ENCODE measurements at regions of chr12 and their contacts with region 1.

Region 1: GRCh38 chr12:120116792-120117651 is 469 bp upstream of the RAB35 start:
- DNase-seq: peak; percentile 72 to 96
- H3K4me3 ChIP-seq: peak overlapping the region; percentile 87 to 89
- H3K27ac ChIP-seq: peak overlapping the region; percentile 92 to 94
- H3K4me1 ChIP-seq: peaks cover 13 to 31% of the 10 kb centered on the region in 2 donors
- H3K27me3 ChIP-seq: no peaks in the 10 kb centered on the region
- CTCF ChIP-seq: no peak

Region 2: DNA sequence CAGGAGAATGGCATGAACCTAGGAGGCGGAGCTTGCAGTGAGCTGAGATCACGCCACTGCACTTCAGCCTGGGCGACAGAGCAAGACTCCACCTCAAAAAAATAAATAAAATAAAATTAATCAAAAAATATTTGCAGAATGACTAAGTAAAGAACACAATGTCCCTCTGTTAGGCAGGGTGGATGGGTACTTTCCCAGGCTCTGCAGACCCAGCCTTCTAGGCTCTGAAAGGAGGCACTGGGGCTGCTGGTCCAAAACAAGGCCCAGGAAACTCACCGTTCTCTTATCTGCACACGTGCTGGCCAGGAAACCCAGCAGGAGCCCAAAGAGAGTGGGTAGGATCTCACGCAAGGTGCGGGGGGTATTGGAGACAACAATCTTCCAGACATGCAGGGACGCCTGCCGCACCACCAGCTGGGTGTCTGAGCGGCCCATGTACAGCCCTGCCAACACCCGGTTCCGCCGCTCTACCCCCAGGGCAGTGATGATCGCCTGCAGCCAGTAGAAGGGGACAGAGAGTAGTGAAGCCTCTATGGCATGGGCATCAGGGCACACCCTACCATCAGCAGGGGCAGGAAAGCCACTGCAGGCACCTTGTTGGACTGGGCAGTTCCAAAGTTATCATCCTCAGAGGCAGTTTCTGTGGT is 25.3 kb after region 1 on chr12:
- intact Hi-C with region 1: no loop called
- DNase-seq: no peak
- H3K4me3 ChIP-seq: no peak overlapping the region
- H3K27ac ChIP-seq: no peak overlapping the region
- H3K4me1 ChIP-seq: no peaks in the 10 kb centered on the region
- H3K27me3 ChIP-seq: no peaks in the 10 kb centered on the region
- CTCF ChIP-seq: no peak

Region 3: DNA sequence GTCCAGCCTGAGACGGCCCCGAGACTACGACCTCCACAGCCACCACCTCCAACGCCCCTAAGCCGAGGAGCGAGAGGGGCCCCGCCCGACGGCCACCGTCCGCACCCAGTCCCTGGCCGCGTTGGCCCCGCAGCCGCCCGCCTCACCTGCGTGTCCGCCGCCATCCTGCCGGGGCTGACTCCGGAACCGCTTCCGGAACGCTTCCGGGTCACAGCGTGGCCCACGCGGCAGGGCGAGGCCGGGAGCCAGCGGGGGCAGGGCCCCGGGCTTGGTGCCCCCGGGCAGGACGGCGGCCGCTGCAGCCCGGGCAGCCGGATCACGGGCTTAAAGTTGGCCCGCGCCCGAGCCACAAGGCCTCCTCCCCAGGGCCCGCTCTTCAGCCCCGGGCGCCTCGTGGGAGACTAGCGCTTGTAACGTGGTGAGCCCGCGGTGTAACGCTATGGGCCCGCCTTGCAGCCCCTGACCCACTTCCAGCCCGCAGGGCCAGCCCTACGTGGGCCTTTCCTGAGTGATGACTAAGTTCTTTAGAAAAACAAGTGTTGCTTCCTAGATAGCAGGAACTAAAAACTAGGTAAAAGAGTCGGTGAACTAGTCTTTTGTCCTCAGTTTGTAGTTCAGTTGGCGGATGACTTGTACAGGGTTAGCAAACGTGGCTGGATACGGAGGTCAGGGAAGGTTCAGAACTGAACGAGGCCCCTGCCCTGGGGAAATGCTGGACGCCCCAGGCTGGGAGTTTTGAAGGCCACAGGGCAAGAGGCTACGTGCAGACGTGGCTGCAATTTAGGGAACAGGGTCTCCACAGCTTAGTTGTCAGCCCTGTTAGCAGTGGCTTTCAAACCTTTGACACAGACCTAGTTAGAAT is 77.7 kb after region 1 on chr12 and contains the start of gene GCN1:
- intact Hi-C with region 1: loop called (anchors 2 kb)
- DNase-seq: peak; percentile 16 to 90
- H3K4me3 ChIP-seq: peak within 1 kb of the TSS; percentile 72 to 82
- H3K27ac ChIP-seq: peak within 1 kb of the TSS; percentile 75 to 90
- H3K4me1 ChIP-seq: peaks cover 15 to 29% of the 10 kb centered on the region in 2 donors
- H3K27me3 ChIP-seq: no peaks in the 10 kb centered on the region
- CTCF ChIP-seq: no peak
- total RNA-seq, gene GCN1: 49.0 TPM